PC-3 (cell line): ENCODE measurements at regions of chr5 and their contacts with region 1.

Region 1: DNA sequence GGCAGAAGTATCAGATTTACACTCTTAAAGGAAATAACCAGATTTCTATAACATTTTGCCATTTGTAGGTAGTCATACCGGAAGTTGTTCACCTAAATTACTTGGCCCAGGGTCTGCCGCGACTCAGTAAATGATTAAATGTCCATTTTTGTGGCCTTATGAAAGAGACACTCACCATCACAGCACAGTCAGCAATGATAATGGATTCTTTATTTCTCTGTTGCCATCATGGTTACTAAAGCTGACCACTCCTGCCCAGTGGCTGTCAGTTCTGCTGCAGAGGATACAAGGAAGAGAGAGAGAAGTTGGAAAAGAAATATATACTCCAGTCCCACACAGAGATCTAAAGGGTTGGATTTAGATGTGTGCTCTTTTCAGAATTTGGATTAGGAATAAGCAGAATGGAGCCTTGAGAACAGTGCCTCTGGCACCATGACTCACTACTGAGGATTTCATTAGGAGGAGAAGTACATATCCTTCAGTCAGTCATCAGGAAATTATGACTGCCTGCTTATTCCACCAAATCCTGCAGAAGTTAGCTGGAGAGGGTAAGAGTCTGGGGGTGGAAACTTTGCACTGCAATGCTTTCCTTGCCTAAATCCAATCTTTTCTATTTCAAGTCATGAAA is 72.8 kb upstream of the EFNA5 start:
- DNase-seq: peak; percentile 93
- ATAC-seq: peak; percentile 96
- H3K4me3 ChIP-seq: peak overlapping the region; percentile 8; the same call in 1 of the 2 replicates
- H3K27ac ChIP-seq: peak overlapping the region; percentile 74
- H3K4me1 ChIP-seq: peaks cover 29% of the 10 kb centered on the region
- H3K27me3 ChIP-seq: no peaks in the 10 kb centered on the region
- CTCF ChIP-seq: no peak

Region 2: DNA sequence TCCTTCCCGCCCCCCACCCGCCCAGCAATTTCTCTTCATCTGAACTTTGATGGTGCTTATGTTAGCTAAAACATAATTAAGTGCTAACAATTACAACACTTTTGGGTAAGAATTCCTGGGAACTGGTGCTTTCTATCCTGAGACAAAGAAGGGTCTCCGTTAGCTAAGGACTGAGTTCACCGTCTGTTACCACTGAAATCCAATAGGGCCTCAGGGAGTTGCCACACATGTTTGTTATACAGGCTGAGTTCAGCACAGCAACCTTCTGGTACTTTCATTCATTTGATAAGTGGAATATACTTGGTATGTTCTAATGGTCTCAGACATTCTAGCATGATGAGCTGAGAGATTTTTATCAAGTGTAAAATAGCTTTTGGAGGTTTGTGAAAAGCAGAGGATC is 510.7 kb before region 1 on chr5:
- CTCF ChIA-PET with region 1: no interaction called
- POLR2A ChIA-PET with region 1: no interaction called
- intact Hi-C with region 1: no loop called
- DNase-seq: no peak
- ATAC-seq: no peak
- H3K4me3 ChIP-seq: no peak overlapping the region
- H3K27ac ChIP-seq: no peak overlapping the region
- H3K4me1 ChIP-seq: no peaks in the 10 kb centered on the region
- H3K27me3 ChIP-seq: no peaks in the 10 kb centered on the region
- CTCF ChIP-seq: no peak

Region 3: DNA sequence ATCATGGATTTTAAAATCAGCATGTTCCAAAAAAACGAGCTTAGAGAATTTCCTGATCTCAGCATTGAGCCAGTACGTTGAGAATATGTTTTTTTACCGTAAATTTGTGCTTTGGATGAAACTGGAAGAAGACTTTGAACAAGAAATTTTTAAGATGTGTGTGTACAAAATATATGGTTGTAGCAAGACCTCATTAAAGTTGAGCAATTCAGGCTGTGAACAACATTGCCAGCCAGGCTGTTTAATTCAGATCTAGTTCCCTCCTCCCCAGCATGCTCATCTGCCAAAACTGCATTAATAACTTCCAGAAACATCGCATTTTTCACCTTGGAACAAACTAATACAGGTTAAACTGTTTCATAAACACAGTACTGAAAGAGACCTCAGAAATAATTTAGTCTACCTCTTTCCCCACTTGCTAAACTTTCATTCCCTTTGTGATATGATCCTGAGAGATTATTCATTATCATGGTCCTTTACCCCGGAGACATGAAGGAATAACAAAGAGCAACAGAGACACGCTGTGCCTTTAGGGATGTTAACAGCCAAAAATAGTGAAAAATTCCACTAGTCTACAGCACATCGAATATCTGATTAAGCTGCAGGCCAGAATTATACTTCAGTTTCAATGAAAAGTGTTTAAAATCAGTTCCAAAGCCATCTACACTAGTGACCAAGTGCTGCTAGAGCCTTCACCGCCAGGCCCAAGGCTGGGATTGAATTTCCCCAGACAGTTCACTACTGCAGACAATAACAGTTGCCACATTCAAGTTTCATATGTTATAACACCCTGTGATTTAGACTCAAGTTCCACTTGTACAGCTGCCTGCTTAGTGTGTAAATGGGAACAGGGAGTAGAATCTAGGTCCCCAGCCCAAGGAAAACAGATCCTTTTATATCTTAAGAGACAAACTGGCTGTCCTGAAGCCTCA is 162.3 kb before region 1 on chr5:
- CTCF ChIA-PET with region 1: no interaction called
- POLR2A ChIA-PET with region 1: no interaction called
- intact Hi-C with region 1: no loop called
- DNase-seq: no peak
- ATAC-seq: no peak
- H3K4me3 ChIP-seq: no peak overlapping the region
- H3K27ac ChIP-seq: no peak overlapping the region
- H3K4me1 ChIP-seq: peaks cover 30% of the 10 kb centered on the region
- H3K27me3 ChIP-seq: no peaks in the 10 kb centered on the region
- CTCF ChIP-seq: no peak

Region 4: DNA sequence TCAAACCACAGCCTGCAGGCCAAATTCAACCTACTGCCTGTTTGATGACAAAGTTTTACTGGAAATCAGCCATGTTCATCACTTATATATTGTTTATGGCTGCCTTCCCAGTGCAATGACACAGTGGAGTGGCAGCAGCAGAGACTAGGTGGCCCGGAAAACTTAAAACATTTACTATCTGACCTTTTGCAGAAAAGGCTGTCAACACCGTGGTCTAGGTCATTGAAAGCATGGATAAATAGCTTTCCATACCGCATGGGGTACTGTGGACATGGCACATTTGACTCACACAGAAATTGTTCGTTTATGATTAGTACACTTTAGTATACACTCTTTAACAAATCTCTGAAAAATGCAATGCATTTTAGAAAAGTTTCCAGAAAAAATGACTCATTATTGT is 225.5 kb after region 1 on chr5:
- CTCF ChIA-PET with region 1: no interaction called
- POLR2A ChIA-PET with region 1: no interaction called
- intact Hi-C with region 1: loop called (anchors 5 kb)
- DNase-seq: peak; percentile 88
- ATAC-seq: peak; percentile 68
- H3K4me3 ChIP-seq: peak overlapping the region; percentile 39
- H3K27ac ChIP-seq: peak overlapping the region; percentile 91
- H3K4me1 ChIP-seq: peaks cover 52% of the 10 kb centered on the region
- H3K27me3 ChIP-seq: no peaks in the 10 kb centered on the region
- CTCF ChIP-seq: no peak

Region 5: GRCh38 chr5:108093186-108093585 is 349.7 kb after region 1 on chr5:
- CTCF ChIA-PET with region 1: no interaction called
- POLR2A ChIA-PET with region 1: no interaction called
- intact Hi-C with region 1: loop called (anchors 10 kb)
- DNase-seq: peak; percentile 55
- ATAC-seq: peak; percentile 75
- H3K4me3 ChIP-seq: no peak overlapping the region
- H3K27ac ChIP-seq: no peak overlapping the region
- H3K4me1 ChIP-seq: no peaks in the 10 kb centered on the region
- H3K27me3 ChIP-seq: no peaks in the 10 kb centered on the region
- CTCF ChIP-seq: peak; percentile 77

Region 6: GRCh38 chr5:108148715-108149139 is 405.2 kb after region 1 on chr5:
- CTCF ChIA-PET with region 1: no interaction called
- POLR2A ChIA-PET with region 1: no interaction called
- intact Hi-C with region 1: loop called (anchors 1 kb)
- DNase-seq: peak; percentile 59
- ATAC-seq: peak; percentile 90
- H3K4me3 ChIP-seq: no peak overlapping the region
- H3K27ac ChIP-seq: no peak overlapping the region
- H3K4me1 ChIP-seq: no peaks in the 10 kb centered on the region
- H3K27me3 ChIP-seq: no peaks in the 10 kb centered on the region
- CTCF ChIP-seq: peak; percentile 86